ENCODE measurements at regions of chr6 and their contacts with region 1.

Region 1: DNA sequence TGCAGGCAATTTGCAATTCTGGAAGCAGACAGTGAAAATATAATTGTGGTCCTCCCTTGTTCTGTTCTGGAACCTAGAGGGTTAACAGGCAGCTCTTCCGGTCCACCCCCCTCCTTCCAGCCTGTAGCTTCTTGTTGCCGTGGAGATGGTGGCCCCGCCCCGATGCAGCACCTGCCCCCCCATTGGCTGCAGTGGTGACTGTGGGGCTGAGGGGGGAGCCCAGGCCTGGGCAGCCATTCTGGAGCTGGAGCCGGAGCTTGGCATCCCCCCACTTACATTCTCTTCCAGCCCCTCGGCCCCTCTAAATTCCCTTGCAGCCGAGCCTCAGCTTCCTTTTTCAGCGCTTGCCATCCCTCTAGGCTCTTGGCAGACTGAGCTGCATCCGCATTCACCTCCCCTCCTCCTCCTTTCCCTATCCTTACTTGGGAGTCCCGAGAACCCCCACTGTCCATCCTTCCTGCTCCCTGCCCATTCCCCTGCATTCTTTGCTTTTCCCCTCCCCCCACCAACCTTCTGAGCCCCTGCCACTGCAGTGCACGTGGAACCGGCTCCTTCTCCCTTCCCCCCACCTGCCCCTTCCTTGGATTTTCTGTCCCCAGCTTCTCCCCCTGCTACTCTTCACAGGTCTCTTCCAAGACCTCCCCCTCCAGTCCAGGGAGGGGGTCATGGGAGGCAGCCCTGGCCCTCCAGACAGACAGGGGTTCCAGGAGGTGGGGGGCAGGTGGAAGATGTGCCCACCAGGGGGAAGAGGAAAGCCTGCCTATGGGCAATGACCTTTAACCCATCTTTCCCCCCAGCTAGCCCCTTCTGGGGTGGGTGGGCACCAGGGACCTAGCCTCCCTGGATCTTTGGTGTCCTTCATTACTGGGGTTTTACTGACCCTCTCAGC is 11.4 kb downstream of the SYNGAP1 start:
- DNase-seq: peak; percentile 88
- ATAC-seq: peak; percentile 67
- H3K4me3 Mint-ChIP-seq: peak overlapping the region; percentile 86
- H3K27ac Mint-ChIP-seq: peak overlapping the region; percentile 87
- H3K4me1 Mint-ChIP-seq: peaks cover 58% of the 10 kb centered on the region
- H3K27me3 Mint-ChIP-seq: no peaks in the 10 kb centered on the region

Region 2: GRCh38 chr6:31806465-31807272 is 1624.6 kb before region 1 on chr6 and contains the start of gene LSM2:
- POLR2A ChIA-PET with region 1: no interaction called
- DNase-seq: peak; percentile 98
- ATAC-seq: peak; percentile 96
- H3K4me3 Mint-ChIP-seq: peak within 1 kb of the TSS; percentile 99
- H3K27ac Mint-ChIP-seq: peak within 1 kb of the TSS; percentile 94
- H3K4me1 Mint-ChIP-seq: peaks cover 20% of the 10 kb centered on the region
- H3K27me3 Mint-ChIP-seq: no peaks in the 10 kb centered on the region
- total RNA-seq, gene LSM2: 89.9 to 97.9 TPM

Region 3: DNA sequence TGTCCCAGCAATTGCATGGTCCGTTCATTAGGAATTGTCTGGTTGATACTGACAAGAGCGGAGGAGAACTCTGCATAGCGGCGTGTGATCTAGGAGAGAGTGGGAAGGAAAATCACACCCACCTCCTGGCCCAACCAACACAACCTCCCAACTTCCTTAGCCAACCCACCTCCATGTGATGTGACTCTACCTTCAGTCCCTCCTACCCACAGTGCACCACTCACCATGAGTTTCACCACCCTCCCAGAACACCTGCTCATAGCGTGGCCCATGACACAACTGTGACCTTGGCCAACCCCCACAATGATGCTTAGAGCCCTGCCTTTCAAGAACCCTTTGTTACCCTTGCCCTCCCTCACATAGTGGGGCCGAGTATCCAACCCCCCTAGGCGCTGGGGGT is 167.2 kb before region 1 on chr6:
- POLR2A ChIA-PET with region 1: no interaction called
- DNase-seq: no peak
- ATAC-seq: no peak
- H3K4me3 Mint-ChIP-seq: no peak overlapping the region
- H3K27ac Mint-ChIP-seq: no peak overlapping the region
- H3K4me1 Mint-ChIP-seq: peaks cover 12% of the 10 kb centered on the region
- H3K27me3 Mint-ChIP-seq: no peaks in the 10 kb centered on the region

Region 4: GRCh38 chr6:33410050-33410710 is 21.1 kb before region 1 on chr6:
- POLR2A ChIA-PET with region 1: interaction called, 14 read pairs
- DNase-seq: peak; percentile 99
- ATAC-seq: peak; percentile 88
- H3K4me3 Mint-ChIP-seq: peak overlapping the region; percentile 93
- H3K27ac Mint-ChIP-seq: peak overlapping the region; percentile 99
- H3K4me1 Mint-ChIP-seq: peaks cover 36% of the 10 kb centered on the region
- H3K27me3 Mint-ChIP-seq: no peaks in the 10 kb centered on the region

Region 5: DNA sequence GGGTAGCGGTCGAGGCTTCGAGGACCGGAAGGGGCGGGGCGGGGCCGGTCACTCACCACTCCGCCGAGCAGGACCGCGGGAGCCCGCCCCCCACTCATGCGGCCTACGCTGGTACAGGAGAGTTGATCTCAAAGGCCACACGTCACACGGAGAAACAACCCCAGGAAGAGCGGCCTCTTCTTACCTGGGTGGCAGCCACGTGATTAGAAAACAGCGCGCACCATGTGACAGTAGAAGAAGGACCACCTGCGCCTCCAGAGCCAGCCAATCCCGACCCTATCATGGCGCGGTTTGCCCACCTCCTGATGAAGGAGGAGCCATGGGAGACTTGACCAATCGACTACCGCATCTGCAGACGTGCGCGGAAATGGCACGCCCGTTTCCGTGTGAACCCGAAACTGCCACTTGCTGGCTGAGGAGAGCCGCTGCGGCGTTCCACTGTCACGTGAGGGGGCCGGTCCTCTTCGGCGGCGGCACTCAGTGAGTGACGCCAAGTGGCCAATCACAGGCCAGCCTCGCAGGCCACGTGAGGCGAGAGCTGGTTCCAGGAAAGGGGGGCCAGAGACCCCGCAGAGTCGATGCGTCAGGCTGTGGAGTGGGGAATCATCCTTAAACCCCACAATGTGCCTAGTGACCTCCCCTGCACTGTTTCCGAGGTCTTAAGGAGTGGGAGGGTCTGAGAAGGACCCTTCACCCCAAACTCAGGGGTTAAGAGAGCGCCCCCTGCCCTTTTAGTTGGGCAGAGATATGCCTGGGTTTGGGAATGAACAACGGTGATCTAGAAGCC is 13.1 kb before region 1 on chr6 and contains the start of gene CUTA:
- POLR2A ChIA-PET with region 1: interaction called, 28 read pairs
- DNase-seq: peak; percentile 98
- ATAC-seq: peak; percentile 89
- H3K4me3 Mint-ChIP-seq: peak within 1 kb of the TSS; percentile 96
- H3K27ac Mint-ChIP-seq: peak within 1 kb of the TSS; percentile 97
- H3K4me1 Mint-ChIP-seq: peaks cover 48% of the 10 kb centered on the region
- H3K27me3 Mint-ChIP-seq: peaks cover 3% of the 10 kb centered on the region
- total RNA-seq, gene CUTA: 202 to 209 TPM

Region 6: GRCh38 chr6:33454009-33454946 is 23.0 kb after region 1 on chr6 and contains the start of gene ZBTB9:
- POLR2A ChIA-PET with region 1: interaction called, 15 read pairs
- DNase-seq: peak; percentile 93
- ATAC-seq: peak; percentile 99
- H3K4me3 Mint-ChIP-seq: peak within 1 kb of the TSS; percentile 86
- H3K27ac Mint-ChIP-seq: peak within 1 kb of the TSS; percentile 75
- H3K4me1 Mint-ChIP-seq: peaks cover 21% of the 10 kb centered on the region
- H3K27me3 Mint-ChIP-seq: no peaks in the 10 kb centered on the region
- total RNA-seq, gene ZBTB9: 9.1 to 9.8 TPM

Region 7: DNA sequence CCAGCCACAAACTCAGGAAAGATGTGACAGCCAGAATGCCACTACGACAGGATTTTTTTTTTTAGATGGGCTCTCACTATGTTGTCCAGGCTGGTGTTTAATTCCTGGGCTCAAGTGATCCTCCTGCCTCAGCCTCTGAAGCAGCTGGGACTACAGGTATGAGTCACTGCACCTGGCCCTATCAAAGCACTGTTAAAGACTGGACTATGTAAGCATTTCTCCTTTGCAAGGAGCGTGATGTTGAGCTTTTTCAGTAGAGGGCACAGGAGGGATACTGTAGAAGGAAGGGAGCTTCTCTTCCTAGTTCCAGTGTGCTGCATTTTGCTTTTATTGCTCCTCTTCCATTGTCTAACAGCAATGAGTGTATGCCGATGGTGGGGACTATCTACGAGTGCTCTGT is 59.0 kb after region 1 on chr6:
- POLR2A ChIA-PET with region 1: no interaction called
- DNase-seq: no peak
- ATAC-seq: no peak
- H3K4me3 Mint-ChIP-seq: no peak overlapping the region
- H3K27ac Mint-ChIP-seq: no peak overlapping the region
- H3K4me1 Mint-ChIP-seq: no peaks in the 10 kb centered on the region
- H3K27me3 Mint-ChIP-seq: peaks cover 13% of the 10 kb centered on the region

Region 8: GRCh38 chr6:33570806-33571636 is 139.8 kb after region 1 on chr6:
- POLR2A ChIA-PET with region 1: interaction called, 14 read pairs
- DNase-seq: peak; percentile 93
- ATAC-seq: peak; percentile 91
- H3K4me3 Mint-ChIP-seq: peak overlapping the region; percentile 90
- H3K27ac Mint-ChIP-seq: peak overlapping the region; percentile 99
- H3K4me1 Mint-ChIP-seq: peaks cover 28% of the 10 kb centered on the region
- H3K27me3 Mint-ChIP-seq: no peaks in the 10 kb centered on the region

Region 9: GRCh38 chr6:33579828-33580714 is 148.8 kb after region 1 on chr6 and contains the start of gene BAK1:
- POLR2A ChIA-PET with region 1: interaction called, 22 read pairs
- DNase-seq: peak; percentile 81
- ATAC-seq: peak; percentile 94
- H3K4me3 Mint-ChIP-seq: peak within 1 kb of the TSS; percentile 99
- H3K27ac Mint-ChIP-seq: peak within 1 kb of the TSS; percentile 99
- H3K4me1 Mint-ChIP-seq: peaks cover 29% of the 10 kb centered on the region
- H3K27me3 Mint-ChIP-seq: no peaks in the 10 kb centered on the region
- total RNA-seq, gene BAK1: 48.0 to 48.1 TPM